ENCODE measurements at regions of chrX and their contacts with region 1.

Region 1: DNA sequence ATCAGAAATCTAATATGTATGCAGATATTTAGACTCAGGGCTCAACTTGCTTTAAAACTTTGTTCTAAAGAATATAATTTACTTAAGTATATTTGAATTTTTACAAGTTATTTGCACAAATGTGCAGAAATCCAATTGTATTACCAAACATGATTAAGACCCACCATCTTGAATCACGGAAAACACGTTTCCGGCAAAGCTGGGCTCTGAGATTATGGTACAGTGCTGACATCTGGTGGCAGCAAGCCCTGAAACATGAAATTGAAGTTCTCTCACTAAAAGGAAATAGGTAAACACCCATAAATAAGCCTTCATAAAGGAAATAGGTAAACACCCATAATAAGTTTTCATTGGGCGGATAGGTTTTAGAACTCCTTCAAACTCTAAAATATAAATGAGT is 98.3 kb upstream of the MAOA start:
- DNase-seq: peak in 1 of 2 donors; percentile 60
- ATAC-seq: no peak
- H3K4me3 ChIP-seq: no peak overlapping the region
- H3K27ac ChIP-seq: no peak overlapping the region
- H3K4me1 ChIP-seq: no peaks in the 10 kb centered on the region
- H3K27me3 ChIP-seq: no peaks in the 10 kb centered on the region

Region 2: GRCh38 chrX:41781502-41781901 is 1776.3 kb before region 1 on chrX:
- intact Hi-C with region 1: loop called in 1 of 2 experiments (anchors 5 kb)
- DNase-seq: no peak
- ATAC-seq: no peak
- H3K4me3 ChIP-seq: no peak overlapping the region
- H3K27ac ChIP-seq: no peak overlapping the region
- H3K4me1 ChIP-seq: no peaks in the 10 kb centered on the region
- H3K27me3 ChIP-seq: no peaks in the 10 kb centered on the region

Region 3: GRCh38 chrX:41796577-41796976 is 1761.2 kb before region 1 on chrX:
- intact Hi-C with region 1: loop called in 1 of 2 experiments (anchors 5 kb)
- DNase-seq: no peak
- ATAC-seq: no peak
- H3K4me3 ChIP-seq: no peak overlapping the region
- H3K27ac ChIP-seq: no peak overlapping the region
- H3K4me1 ChIP-seq: no peaks in the 10 kb centered on the region
- H3K27me3 ChIP-seq: no peaks in the 10 kb centered on the region

Region 4: GRCh38 chrX:42678125-42678524 is 879.7 kb before region 1 on chrX:
- intact Hi-C with region 1: loop called in 1 of 2 experiments (anchors 10 kb)
- DNase-seq: no peak
- ATAC-seq: no peak
- H3K4me3 ChIP-seq: no peak overlapping the region
- H3K27ac ChIP-seq: no peak overlapping the region
- H3K4me1 ChIP-seq: no peaks in the 10 kb centered on the region
- H3K27me3 ChIP-seq: no peaks in the 10 kb centered on the region

Region 5: DNA sequence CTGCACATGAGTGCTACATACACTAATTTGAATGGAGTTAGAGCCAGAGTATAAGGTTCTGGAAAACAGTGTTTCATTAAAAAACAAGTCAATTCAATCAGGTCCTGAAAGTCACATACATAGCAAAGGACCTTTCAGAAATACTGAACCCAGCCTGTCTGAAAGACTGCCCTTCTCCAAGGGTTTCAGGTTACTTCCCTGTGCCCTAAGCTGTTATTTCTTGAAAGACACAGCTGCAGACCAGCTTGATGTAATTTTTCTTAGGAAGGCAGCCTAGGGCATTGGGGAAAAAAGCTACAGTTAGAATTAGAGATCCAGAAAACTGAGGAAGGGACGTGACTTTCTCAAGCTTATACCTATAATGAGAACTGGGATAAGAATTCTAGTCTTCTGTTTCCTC is 57.5 kb before region 1 on chrX:
- intact Hi-C with region 1: no loop called
- DNase-seq: no peak
- ATAC-seq: no peak
- H3K4me3 ChIP-seq: no peak overlapping the region
- H3K27ac ChIP-seq: no peak overlapping the region
- H3K4me1 ChIP-seq: no peaks in the 10 kb centered on the region
- H3K27me3 ChIP-seq: no peaks in the 10 kb centered on the region

Region 6: DNA sequence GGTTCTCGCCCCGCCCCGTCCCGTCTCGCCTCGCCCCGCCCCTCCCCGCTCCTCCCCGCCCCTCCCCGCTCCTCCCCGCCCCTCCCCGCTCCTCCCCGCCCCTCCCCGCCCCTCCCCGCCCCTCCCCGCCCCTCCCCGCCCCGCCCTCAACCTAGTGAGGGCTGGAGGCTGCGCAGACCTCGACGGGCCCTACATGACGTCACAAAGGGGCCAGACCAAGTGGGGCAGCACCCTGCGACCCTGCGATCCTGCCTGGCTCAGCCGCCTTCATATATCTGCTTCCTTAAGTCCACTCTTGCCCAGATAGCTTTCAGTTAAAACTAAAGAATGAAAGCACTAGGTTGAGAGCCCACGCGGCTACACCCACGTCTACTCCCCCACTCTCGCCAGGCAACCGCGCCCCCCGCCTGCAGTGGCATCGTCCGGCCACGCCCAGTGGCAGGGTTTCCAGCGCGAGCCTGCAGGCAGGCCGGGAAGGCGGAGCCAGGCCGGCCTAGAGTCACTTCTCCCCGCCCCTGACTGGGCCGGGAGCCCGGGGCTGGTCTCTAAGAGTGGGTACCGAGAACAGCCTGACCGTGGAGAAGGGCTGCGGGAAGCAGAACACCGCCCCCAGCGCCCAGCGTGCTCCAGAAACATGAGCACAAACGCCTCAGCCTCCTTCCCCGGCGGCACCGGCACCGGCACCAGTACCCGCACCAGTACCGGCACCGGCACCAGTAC is 96.8 kb after region 1 on chrX:
- intact Hi-C with region 1: loop called in 1 of 2 experiments (anchors 5 kb)
- DNase-seq: peak; percentile 95 to 96
- ATAC-seq: peak; percentile 96
- H3K4me3 ChIP-seq: peak overlapping the region; percentile 8 to 73
- H3K27ac ChIP-seq: peak overlapping the region in 1 of 2 donors; percentile 84
- H3K4me1 ChIP-seq: no peaks in the 10 kb centered on the region
- H3K27me3 ChIP-seq: no peaks in the 10 kb centered on the region

Region 7: DNA sequence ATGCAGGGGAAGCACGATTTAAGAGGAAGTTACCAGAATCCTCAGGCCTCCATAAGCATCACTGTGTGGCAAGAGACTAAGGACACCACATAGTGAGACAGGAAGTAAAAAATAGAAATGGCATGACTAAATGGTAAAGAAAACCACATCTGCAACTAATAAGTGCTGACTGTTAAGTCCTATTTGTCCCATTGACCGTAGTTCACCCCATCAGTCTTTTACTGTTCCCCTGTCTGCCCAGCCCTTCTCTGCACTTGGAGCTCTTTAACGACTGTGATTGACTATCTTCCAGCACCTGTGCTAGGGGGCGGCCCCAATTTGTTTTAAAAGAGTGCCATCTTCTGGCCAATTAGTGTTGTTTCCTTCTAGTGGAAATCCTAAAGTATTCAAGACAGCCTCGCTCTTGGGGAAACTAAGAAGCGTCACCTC is 192.5 kb after region 1 on chrX:
- intact Hi-C with region 1: loop called (anchors 1 to 2 kb)
- DNase-seq: peak in 1 of 2 donors; percentile 47
- ATAC-seq: peak; percentile 67
- H3K4me3 ChIP-seq: no peak overlapping the region
- H3K27ac ChIP-seq: no peak overlapping the region
- H3K4me1 ChIP-seq: no peaks in the 10 kb centered on the region
- H3K27me3 ChIP-seq: no peaks in the 10 kb centered on the region